ENCODE measurements at regions of chr19 and their contacts with region 1.

Region 1: GRCh38 chr19:47267350-47267759 is 7.3 kb upstream of the INAFM1 start:
- DNase-seq: no peak
- H3K4me3 ChIP-seq: no peak overlapping the region
- H3K27ac ChIP-seq: no peak overlapping the region
- H3K4me1 ChIP-seq: peaks cover 0 to 11% (median 4%) of the 10 kb centered on the region in 4 experiments
- H3K27me3 ChIP-seq: no peaks in the 10 kb centered on the region

Region 2: DNA sequence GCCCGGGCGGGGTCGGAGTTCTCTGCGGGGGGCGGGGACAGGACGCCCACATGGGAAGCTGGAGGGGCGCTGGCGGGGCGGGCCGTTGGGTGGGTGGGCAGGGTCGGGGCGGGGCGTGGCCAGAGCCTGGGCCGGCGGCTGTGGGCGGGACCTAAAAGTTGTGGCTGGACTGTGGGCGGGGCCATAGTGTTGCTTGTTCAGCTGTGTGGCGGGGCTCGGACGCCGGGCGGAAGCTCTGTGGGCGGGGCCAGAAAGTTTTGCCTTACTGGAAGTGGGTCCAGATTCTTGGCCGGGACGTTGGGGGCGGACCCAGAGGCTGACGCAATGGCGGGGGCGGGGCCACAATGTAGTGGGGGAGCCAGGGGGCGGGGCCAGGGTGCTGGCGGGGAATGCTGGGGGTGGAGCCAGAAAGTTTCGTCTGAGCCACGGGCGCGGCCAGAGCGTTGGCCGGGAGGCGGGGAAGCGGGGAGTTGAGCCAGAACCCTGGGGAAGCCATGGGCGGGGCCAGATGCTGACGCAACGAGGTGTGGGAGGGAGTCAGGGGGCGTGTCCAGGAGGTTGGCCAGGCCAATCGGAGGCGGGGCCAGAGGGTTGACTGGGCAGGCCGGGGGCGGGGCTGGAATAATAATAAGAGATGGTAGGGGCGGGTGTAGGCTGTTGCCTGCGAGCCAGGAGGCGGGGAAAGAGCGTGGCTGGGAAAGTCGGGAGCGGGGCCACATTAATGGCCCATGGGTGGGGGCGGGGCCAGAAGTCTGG is 10.5 kb before region 1 on chr19:
- CTCF ChIA-PET with region 1: interaction called, 12 read pairs
- POLR2A ChIA-PET with region 1: interaction called, 25 read pairs
- DNase-seq: peak; percentile 97 to 99 (median 99)
- H3K4me3 ChIP-seq: peak overlapping the region; percentile 27 to 81 (median 72)
- H3K27ac ChIP-seq: peak overlapping the region; percentile 83 to 93
- H3K4me1 ChIP-seq: peaks cover 4 to 19% (median 15%) of the 10 kb centered on the region in 4 experiments
- H3K27me3 ChIP-seq: no peaks in the 10 kb centered on the region

Region 3: DNA sequence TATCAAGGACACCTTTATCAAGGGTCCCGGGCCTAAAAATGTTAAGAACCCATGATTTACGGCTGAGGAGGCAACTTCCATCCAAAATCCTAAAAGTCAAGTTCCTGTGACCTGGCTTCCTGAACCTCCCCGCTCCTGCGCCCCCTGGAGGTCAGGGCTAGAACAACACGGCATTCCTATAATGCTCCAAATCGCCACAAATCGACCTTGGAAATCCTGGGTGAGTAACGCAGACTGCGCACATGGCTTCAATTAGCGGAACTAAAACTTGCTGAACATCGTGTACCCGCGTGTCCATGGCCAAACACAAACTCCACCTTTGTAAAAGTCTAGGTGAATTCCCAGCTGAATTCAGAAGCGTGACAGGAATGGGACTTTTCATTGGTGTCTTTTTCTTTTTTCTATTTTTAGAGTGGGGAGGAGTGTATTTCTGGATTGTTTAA is 38.0 kb after region 1 on chr19:
- CTCF ChIA-PET with region 1: no interaction called
- POLR2A ChIA-PET with region 1: no interaction called
- DNase-seq: peak; percentile 40 to 60 (median 47)
- H3K4me3 ChIP-seq: no peak overlapping the region
- H3K27ac ChIP-seq: no peak overlapping the region
- H3K4me1 ChIP-seq: peaks cover 5 to 16% (median 8%) of the 10 kb centered on the region in 4 experiments
- H3K27me3 ChIP-seq: peaks cover 0 to 45% (median 12%) of the 10 kb centered on the region in 5 experiments

Measured in common myeloid progenitor, CD34-positive (primary cell).